ENCODE measurements at regions of chr1 and their contacts with region 1.

Region 1: GRCh38 chr1:9651565-9652378 is at the start of gene PIK3CD:
- DNase-seq: peak; percentile 84
- H3K4me3 Mint-ChIP-seq: peak within 1 kb of the TSS; percentile 98
- H3K27ac Mint-ChIP-seq: peak within 1 kb of the TSS; percentile 99
- H3K4me1 Mint-ChIP-seq: peaks cover 46% of the 10 kb centered on the region
- H3K27me3 Mint-ChIP-seq: no peaks in the 10 kb centered on the region
- total RNA-seq, gene PIK3CD: 233 TPM in 2 replicates

Region 2: DNA sequence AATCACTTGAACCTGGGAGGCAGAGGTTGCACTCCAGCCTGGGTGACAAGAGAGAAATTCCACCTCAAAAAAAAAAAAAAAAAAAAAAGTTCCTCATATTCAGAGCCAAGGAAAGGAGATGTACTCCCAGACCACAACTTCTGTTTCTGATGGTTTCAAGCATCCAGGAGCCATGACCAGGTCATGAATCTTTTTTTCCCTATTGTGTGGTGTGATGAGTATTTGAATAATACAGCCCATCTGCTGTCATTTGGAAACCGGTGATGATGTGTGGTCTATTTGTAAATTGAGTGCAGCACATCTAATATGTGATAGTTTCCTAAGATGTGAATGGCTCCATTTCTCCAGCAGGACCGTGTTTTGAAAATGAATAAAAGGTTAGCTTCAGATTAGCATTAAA is 18.3 kb after region 1 on chr1:
- intact Hi-C with region 1: loop called (anchors 1 kb)
- DNase-seq: no peak
- H3K4me3 Mint-ChIP-seq: no peak overlapping the region
- H3K27ac Mint-ChIP-seq: peak overlapping the region; percentile 91
- H3K4me1 Mint-ChIP-seq: peaks cover 37% of the 10 kb centered on the region
- H3K27me3 Mint-ChIP-seq: no peaks in the 10 kb centered on the region

Region 3: DNA sequence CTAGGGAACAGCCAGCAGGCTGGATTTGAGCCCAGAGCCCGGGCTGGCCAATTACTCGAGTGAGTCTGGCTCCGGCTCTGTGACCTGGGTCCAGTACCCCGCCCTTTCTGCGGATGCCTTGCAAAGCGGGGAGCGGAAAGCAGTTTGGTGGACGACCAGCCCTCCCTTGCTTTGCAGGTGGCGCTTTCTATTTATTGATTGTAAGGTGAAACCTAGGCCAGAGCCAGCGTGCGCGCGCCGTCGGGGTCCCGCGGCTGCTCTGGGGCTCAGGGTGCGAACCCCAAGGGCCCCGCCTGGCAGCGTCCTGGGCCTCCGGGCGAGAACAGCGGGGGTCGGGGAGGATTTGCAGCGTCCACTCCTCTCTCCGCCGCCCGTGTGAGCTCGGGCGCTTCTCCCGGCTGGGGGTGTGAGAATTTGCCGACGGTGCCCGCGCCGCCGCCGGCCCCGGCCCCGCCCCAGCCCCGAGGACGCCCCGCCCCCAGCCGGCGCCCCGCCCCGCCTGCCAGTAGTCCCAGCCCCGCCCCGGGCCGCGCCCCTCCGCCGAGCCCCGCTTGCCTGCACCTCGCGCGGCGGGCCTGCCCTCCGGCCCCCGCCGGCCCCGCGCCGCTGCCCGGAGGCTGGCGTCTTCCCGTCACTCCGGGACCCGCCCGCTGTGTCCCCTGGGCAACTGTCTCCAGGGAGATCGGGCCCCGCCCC is 37.4 kb after region 1 on chr1:
- intact Hi-C with region 1: loop called (anchors 1 kb)
- DNase-seq: peak; percentile 94
- H3K4me3 Mint-ChIP-seq: peak overlapping the region; percentile 78
- H3K27ac Mint-ChIP-seq: no peak overlapping the region
- H3K4me1 Mint-ChIP-seq: peaks cover 64% of the 10 kb centered on the region
- H3K27me3 Mint-ChIP-seq: no peaks in the 10 kb centered on the region

Region 4: DNA sequence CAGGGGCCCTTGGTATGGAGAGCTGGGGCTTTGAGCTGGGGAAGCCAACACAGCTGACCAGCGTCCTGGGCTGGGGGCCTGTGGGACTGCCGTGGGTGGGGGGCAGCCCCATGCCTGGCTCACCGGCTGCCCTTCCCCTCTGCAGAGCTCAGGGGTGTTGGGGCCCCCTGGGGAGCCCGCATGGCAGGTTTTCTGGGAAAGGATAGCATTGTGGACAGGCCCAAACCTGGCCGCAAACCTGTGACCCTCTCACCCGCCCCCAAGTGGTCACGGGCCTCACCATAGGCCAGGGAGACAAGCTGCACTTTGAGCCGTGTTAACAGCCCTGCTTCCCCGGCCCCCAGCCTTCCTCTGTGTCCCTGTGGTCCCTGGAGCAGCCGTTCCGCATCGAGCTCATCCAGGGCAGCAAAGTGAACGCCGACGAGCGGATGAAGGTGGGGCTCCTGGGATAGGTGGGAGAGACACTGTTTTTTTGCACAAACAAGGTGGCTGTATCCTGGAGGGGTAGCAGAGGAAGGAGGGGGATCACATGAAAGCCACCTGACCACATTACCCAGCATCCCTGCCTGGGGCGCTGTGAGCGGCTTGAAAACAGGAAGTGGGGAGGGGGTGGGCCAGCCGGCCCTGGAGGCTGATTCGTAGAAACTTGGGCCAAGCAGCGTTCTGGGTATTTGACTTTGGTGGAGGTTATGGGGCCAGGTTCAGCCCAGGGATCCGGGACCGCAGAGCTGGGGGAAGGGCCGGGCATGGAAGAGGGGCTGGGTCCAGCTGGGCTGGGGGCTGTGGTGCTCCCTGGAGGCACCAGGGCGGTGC is 65.6 kb after region 1 on chr1:
- intact Hi-C with region 1: loop called (anchors 2 kb)
- DNase-seq: peak; percentile 96
- H3K4me3 Mint-ChIP-seq: peak overlapping the region; percentile 82
- H3K27ac Mint-ChIP-seq: peak overlapping the region; percentile 92
- H3K4me1 Mint-ChIP-seq: peaks cover 57% of the 10 kb centered on the region
- H3K27me3 Mint-ChIP-seq: no peaks in the 10 kb centered on the region

Region 5: GRCh38 chr1:9724706-9725476 is 73.1 kb after region 1 on chr1:
- intact Hi-C with region 1: loop called (anchors 1 kb)
- DNase-seq: peak; percentile 91
- H3K4me3 Mint-ChIP-seq: peak overlapping the region; percentile 23
- H3K27ac Mint-ChIP-seq: peak overlapping the region; percentile 56
- H3K4me1 Mint-ChIP-seq: peaks cover 46% of the 10 kb centered on the region
- H3K27me3 Mint-ChIP-seq: no peaks in the 10 kb centered on the region